IMR-90 (cell line): ENCODE measurements at regions of chr17 and their contacts with region 1.

Region 1: GRCh38 chr17:27892866-27893769 is at the start of gene LYRM9:
- DNase-seq: peak; percentile 81
- ATAC-seq: peak; percentile 99
- H3K4me3 ChIP-seq: peak within 1 kb of the TSS; percentile 73
- H3K27ac ChIP-seq: peak within 1 kb of the TSS; percentile 72
- H3K4me1 ChIP-seq: peaks cover 6% of the 10 kb centered on the region
- H3K27me3 ChIP-seq: peaks cover 8% of the 10 kb centered on the region
- CTCF ChIP-seq: peak; percentile 91
- POLR2A ChIP-seq: no peak
- RAD21 ChIP-seq: no peak
- total RNA-seq, gene LYRM9: 3.2 and 3.3 TPM in 2 replicates

Region 2: GRCh38 chr17:28112220-28113005 is 219.3 kb after region 1 on chr17:
- CTCF ChIA-PET with region 1: no interaction called
- POLR2A ChIA-PET with region 1: no interaction called
- dilution Hi-C with region 1: no loop called
- in situ Hi-C with region 1: no loop called
- intact Hi-C with region 1: loop called (anchors 10 kb)
- DNase-seq: peak; percentile 35
- ATAC-seq: peak; percentile 73
- H3K4me3 ChIP-seq: no peak overlapping the region
- H3K27ac ChIP-seq: peak overlapping the region; percentile 57; the same call in 1 of the 2 replicates
- H3K4me1 ChIP-seq: peaks cover 7% of the 10 kb centered on the region
- H3K27me3 ChIP-seq: no peaks in the 10 kb centered on the region
- CTCF ChIP-seq: no peak
- POLR2A ChIP-seq: no peak
- RAD21 ChIP-seq: no peak

Region 3: DNA sequence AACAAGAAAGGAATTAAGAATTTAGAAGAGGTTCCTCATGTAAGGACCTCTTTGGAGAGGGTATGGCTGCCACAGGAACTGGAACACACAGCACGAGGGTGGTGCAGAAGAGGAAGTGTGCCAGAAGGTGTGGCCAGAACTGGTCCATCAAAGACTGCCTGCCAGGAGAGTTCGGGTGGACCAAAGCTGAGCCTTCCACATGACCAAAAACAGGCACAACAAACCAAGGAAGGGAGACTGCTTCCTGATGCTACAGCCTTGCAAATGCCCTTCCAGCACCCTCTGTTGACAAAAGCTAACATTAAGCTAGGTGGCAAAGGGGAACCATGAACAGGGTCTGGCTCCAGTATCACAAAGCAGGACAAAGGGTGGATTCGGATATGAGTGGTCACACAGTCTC is 300.1 kb after region 1 on chr17:
- CTCF ChIA-PET with region 1: no interaction called
- POLR2A ChIA-PET with region 1: no interaction called
- dilution Hi-C with region 1: no loop called
- in situ Hi-C with region 1: no loop called
- intact Hi-C with region 1: loop called (anchors 10 kb)
- DNase-seq: no peak
- ATAC-seq: no peak
- H3K4me3 ChIP-seq: no peak overlapping the region
- H3K27ac ChIP-seq: no peak overlapping the region
- H3K4me1 ChIP-seq: peaks cover 4% of the 10 kb centered on the region
- H3K27me3 ChIP-seq: no peaks in the 10 kb centered on the region
- CTCF ChIP-seq: no peak
- POLR2A ChIP-seq: no peak
- RAD21 ChIP-seq: no peak

Region 4: GRCh38 chr17:28252436-28252835 is 359.3 kb after region 1 on chr17:
- CTCF ChIA-PET with region 1: interaction called, 3 read pairs
- POLR2A ChIA-PET with region 1: no interaction called
- dilution Hi-C with region 1: no loop called
- in situ Hi-C with region 1: no loop called
- intact Hi-C with region 1: loop called (anchors 2 kb)
- DNase-seq: peak; percentile 62
- ATAC-seq: peak; percentile 13; the same call in 1 of the 2 replicates
- H3K4me3 ChIP-seq: no peak overlapping the region
- H3K27ac ChIP-seq: no peak overlapping the region
- H3K4me1 ChIP-seq: no peaks in the 10 kb centered on the region
- H3K27me3 ChIP-seq: peaks cover 20% of the 10 kb centered on the region
- CTCF ChIP-seq: no peak
- POLR2A ChIP-seq: no peak
- RAD21 ChIP-seq: no peak

Region 5: GRCh38 chr17:28318759-28319660 is 425.9 kb after region 1 on chr17 and contains the start of gene TMEM97:
- CTCF ChIA-PET with region 1: no interaction called
- POLR2A ChIA-PET with region 1: no interaction called
- dilution Hi-C with region 1: no loop called
- in situ Hi-C with region 1: no loop called
- intact Hi-C with region 1: loop called (anchors 5 kb)
- DNase-seq: peak; percentile 97
- ATAC-seq: peak; percentile 99
- H3K4me3 ChIP-seq: peak within 1 kb of the TSS; percentile 67
- H3K27ac ChIP-seq: peak within 1 kb of the TSS; percentile 15; the same call in 1 of the 2 replicates
- H3K4me1 ChIP-seq: peaks cover 4% of the 10 kb centered on the region; the same call in 1 of the 2 replicates
- H3K27me3 ChIP-seq: no peaks in the 10 kb centered on the region
- CTCF ChIP-seq: 0 out of 2 replicates have a peak, but pooled peaks have one; percentile 1
- POLR2A ChIP-seq: no peak
- RAD21 ChIP-seq: no peak
- total RNA-seq, gene TMEM97: 21.3 and 23.1 TPM in 2 replicates

Region 6: GRCh38 chr17:28335201-28335955 is 442.3 kb after region 1 on chr17 and contains the starts of genes IFT20 and TNFAIP1:
- CTCF ChIA-PET with region 1: no interaction called
- POLR2A ChIA-PET with region 1: no interaction called
- dilution Hi-C with region 1: no loop called
- in situ Hi-C with region 1: no loop called
- intact Hi-C with region 1: loop called (anchors 5 kb)
- DNase-seq: peak; percentile 100
- ATAC-seq: peak; percentile 93
- H3K4me3 ChIP-seq: peak within 1 kb of the TSS; percentile 59
- H3K27ac ChIP-seq: peak within 1 kb of the TSS; percentile 65
- H3K4me1 ChIP-seq: peaks cover 13% of the 10 kb centered on the region
- H3K27me3 ChIP-seq: no peaks in the 10 kb centered on the region
- CTCF ChIP-seq: 0 out of 2 replicates have a peak, but pooled peaks have one; percentile 2
- POLR2A ChIP-seq: peak; percentile 98
- RAD21 ChIP-seq: peak; percentile 4; the same call in 1 of the 2 replicates
- total RNA-seq, gene IFT20: 25.5 and 37.8 TPM in 2 replicates
- total RNA-seq, gene TNFAIP1: 45.3 and 49.1 TPM in 2 replicates